ENCODE measurements at regions of chr1 and their contacts with region 1.

Region 1: DNA sequence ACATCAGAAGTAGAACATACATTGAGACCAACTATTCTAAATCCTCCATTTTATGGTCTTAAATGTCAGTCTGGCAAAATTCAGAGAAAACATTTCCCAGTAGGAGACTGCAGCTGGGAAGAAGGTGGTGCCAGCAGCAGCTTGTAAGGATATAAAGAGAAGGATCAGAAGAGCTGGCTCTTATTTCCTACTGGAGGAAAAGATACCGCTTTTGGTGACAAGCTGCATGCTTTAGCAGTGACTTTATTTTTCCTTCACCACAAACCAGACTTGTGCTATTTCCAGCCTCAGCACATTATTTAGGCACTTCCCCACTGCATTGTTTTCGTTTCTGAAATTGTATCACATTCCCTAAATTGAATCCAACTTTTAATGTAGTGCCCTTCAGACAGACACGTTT is 28.4 kb downstream of the RNF11 start:
- DNase-seq: no peak
- CTCF ChIP-seq: no peak

Region 2: GRCh38 chr1:51253691-51254090 is 10.8 kb before region 1 on chr1:
- CTCF ChIA-PET with region 1: interaction called, 24 read pairs
- POLR2A ChIA-PET with region 1: no interaction called
- DNase-seq: no peak
- CTCF ChIP-seq: no peak

Region 3: DNA sequence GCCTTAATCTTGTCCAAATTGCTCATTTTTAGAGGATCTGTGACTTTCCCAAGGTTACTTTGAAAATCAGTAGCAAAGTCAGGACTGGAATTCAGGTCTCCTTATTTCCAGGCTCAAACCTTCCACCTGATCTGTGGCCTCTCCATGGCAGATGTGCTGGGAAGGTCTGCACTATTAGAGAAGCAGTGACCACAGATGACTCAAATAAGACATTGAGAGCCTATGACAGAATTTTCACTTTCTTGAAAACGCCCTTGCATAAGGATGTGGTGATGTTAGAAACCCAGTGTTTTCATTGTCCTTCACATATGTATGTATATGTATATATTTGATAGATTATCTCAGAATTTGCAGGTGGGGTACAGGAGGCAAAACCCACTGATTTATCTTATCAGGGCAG is 20.6 kb after region 1 on chr1:
- CTCF ChIA-PET with region 1: interaction called, 18 read pairs
- POLR2A ChIA-PET with region 1: no interaction called
- DNase-seq: peak; percentile 73
- CTCF ChIP-seq: no peak

Region 4: DNA sequence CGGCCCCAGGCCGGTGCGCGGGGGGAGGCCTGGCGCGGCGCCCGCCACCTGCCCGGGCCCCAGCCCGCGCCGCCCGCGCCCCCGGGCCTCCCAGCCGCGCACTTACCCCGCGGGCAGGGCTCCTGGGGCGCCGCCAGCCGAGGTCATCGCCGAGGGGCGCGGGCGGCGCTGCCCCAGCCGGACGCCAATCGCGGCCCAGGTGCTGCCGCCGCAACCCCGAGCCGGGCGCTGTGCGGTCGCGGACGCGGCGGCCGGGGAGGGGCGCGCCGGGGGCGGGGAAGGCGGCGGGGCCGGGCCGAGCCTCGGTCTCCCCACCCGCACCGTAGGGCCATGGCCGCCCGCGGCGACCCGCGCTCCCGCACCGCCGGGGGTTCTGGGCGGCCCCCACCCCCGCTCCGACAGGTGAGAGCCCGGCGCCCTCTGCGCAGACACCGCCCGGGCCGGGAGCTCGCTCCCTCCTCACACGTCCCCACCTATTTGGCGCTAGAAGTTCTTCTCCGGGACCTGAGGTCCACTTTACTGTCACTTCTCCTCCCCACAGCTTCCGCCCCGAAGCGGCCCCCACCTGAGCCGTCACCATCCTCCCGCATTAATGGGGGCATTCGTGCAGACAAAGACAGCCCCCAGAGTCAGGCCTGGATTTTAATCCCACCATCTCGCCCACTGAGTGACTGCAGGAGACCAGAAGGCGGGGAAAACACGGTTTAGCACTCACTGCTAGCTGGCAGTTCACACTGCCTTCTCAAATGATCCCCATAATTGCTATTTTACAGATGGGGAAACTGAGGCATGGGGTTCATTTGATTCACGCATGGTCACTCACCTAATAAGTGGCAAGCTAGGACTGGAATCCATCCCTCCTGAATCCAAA is 66.1 kb after region 1 on chr1 and contains the start of gene TTC39A:
- CTCF ChIA-PET with region 1: no interaction called
- POLR2A ChIA-PET with region 1: no interaction called
- DNase-seq: no peak
- CTCF ChIP-seq: no peak

Measured in GM10248 (cell line).